RWPE1 (cell line): ENCODE measurements at regions of chr12 and their contacts with region 1.

Region 1: GRCh38 chr12:67623259-67623658 is 25.3 kb upstream of the DYRK2 start:
- DNase-seq: no peak
- H3K27ac ChIP-seq: no peak overlapping the region
- CTCF ChIP-seq: no peak

Region 2: GRCh38 chr12:67667276-67668073 is 44.2 kb after region 1 on chr12:
- CTCF ChIA-PET with region 1: interaction called, 10 read pairs
- POLR2A ChIA-PET with region 1: no interaction called
- DNase-seq: no peak
- H3K27ac ChIP-seq: no peak overlapping the region
- CTCF ChIP-seq: no peak